RWPE1 (cell line): ENCODE measurements at regions of chr17 and their contacts with region 1.

Region 1: DNA sequence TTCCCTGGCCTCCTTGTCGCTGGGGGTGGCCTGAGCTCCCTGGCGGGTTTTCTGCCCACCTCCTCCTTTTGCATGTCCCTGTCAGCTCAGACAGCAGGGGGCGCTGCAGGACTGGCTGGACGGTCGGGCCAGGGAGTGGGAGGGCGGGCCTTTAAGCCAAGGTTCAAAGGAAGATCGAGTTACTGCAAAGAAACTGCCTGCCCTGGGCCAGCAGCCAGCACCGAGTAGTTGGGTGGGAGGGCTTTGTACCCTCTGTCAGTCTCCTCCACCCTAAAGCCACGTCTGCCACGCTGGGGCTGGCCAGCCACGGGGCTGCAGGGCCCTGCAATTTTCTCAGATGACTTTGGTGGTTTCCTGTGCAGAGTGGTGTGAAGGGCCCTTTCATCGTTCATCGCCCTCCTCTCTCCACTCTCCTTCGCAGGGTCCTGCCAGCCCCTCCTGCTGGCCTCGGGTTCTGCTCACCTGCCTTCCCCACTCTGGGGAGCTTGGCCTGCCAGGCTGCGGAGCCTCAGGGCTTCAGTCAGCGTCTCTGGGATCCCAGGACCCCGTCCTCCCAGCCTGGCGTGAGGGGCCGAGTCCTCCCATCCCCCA is 12.3 kb downstream of the GPR142 start:
- DNase-seq: peak; percentile 81
- H3K27ac ChIP-seq: peak overlapping the region; percentile 89
- CTCF ChIP-seq: peak; percentile 96

Region 2: GRCh38 chr17:74024871-74025531 is 354.6 kb before region 1 on chr17:
- CTCF ChIA-PET with region 1: no interaction called
- POLR2A ChIA-PET with region 1: no interaction called
- DNase-seq: no peak
- H3K27ac ChIP-seq: no peak overlapping the region
- CTCF ChIP-seq: no peak

Region 3: DNA sequence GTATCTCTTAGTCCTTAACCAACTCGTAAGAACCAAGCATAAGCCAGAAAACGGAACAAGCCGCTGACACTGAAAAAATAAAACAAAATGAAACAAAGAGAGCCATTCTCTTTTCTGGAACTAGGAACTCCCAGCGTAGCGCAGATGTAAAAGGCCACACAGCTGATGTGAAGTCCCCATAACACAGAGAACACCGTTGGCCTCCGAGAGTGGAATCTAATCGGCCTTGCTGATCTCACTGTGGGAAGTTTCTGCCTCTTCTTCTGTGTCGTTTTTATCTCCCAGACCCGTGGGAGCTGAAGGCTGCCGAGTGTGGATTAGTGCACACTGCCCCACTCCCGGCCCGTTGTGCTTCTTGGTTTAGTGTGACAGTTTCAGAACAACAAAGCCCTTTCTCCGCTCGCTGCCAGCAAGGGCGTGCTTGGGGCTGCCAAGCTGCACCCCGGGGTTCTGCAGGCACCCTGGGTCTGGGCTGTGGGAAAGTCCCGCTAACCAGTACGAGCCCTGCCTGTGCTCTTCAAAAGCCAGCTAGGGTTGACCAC is 144.5 kb before region 1 on chr17:
- CTCF ChIA-PET with region 1: no interaction called
- POLR2A ChIA-PET with region 1: no interaction called
- DNase-seq: no peak
- H3K27ac ChIP-seq: no peak overlapping the region
- CTCF ChIP-seq: no peak

Region 4: DNA sequence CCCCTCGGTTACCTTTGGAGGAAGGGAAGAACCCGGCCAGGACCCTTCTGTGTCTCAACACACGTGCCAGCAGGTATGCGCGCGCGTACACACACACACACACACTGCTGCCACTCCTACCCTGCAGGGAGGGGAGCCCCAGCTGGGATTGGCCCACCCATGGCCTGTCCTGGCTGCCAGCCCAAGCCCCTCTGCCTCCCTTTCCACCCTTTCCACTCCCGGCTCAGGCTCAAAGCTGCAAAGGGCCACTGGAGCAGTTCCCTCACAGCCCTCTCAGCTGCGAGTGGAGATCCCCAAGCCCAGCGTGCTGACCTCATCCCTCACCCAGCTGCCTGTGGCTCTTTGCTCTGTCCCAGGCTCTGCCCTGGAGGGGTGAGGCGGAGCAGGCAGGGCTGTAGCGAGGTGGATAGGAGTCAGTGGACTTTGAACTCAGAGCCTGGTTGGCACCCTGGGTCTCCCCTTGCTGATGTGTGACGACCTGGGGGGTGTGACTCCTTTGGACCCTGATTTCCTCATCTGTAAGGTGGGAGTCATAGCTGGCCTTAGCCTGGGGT is 39.0 kb before region 1 on chr17:
- CTCF ChIA-PET with region 1: no interaction called
- POLR2A ChIA-PET with region 1: no interaction called
- DNase-seq: no peak
- H3K27ac ChIP-seq: no peak overlapping the region
- CTCF ChIP-seq: no peak

Region 5: DNA sequence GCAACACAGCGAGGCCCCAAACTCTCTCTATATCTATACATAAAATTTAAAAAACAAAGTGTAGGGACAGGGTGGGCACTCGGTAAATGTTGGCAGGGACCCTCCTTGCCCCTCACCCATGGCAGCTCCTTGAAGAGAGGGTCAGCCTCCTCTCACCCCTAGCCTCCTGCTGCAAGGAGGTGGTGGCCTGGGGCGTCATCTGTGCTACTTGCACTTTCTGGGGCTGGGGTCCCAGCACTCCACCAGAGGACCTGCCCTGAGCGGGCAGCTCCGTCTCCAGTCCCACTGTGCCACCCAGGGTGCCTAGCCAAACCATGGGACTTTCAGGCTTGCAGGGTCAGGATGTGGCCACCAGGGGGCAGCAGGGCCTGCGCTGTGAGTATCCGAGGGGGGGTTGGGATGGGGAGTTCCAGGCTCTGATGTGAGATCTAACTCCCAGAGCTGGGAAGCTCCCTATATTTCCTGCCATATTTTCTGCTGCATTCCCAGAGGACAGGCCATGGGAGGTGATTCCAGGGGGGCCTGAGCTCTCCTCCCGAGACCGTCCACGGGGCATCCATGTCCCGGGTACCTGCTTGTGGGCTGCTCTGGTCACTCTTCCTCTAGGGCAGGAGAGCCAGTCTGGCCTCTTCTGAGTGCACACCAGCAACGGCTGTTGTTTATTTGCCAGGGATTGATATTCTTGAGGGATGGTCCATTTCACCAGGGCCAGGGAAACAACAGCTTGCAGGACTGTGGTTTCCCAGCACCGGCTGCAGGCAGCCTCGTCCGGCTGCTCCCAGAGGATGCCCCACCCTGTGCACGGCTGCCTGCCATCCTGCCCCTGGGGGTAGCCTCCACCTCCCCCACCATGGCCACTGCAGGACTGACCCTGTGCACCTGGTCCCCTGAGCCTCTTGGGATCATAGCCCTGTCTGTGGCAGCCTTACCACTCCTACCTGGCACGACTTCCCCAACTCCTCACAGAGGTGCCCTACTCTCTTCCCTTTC is 11.2 kb before region 1 on chr17:
- CTCF ChIA-PET with region 1: interaction called, 26 read pairs
- POLR2A ChIA-PET with region 1: no interaction called
- DNase-seq: peak; percentile 76
- H3K27ac ChIP-seq: no peak overlapping the region
- CTCF ChIP-seq: peak; percentile 96

Region 6: GRCh38 chr17:74417178-74418045 is 37.8 kb after region 1 on chr17:
- CTCF ChIA-PET with region 1: interaction called, 11 read pairs
- POLR2A ChIA-PET with region 1: no interaction called
- DNase-seq: peak; percentile 79
- H3K27ac ChIP-seq: peak overlapping the region; percentile 20; the same call in 1 of the 2 replicates
- CTCF ChIP-seq: no peak

Region 7: GRCh38 chr17:74442670-74443515 is 63.3 kb after region 1 on chr17:
- CTCF ChIA-PET with region 1: interaction called, 23 read pairs
- POLR2A ChIA-PET with region 1: no interaction called
- DNase-seq: peak; percentile 73
- H3K27ac ChIP-seq: peak overlapping the region; percentile 88
- CTCF ChIP-seq: no peak

Region 8: DNA sequence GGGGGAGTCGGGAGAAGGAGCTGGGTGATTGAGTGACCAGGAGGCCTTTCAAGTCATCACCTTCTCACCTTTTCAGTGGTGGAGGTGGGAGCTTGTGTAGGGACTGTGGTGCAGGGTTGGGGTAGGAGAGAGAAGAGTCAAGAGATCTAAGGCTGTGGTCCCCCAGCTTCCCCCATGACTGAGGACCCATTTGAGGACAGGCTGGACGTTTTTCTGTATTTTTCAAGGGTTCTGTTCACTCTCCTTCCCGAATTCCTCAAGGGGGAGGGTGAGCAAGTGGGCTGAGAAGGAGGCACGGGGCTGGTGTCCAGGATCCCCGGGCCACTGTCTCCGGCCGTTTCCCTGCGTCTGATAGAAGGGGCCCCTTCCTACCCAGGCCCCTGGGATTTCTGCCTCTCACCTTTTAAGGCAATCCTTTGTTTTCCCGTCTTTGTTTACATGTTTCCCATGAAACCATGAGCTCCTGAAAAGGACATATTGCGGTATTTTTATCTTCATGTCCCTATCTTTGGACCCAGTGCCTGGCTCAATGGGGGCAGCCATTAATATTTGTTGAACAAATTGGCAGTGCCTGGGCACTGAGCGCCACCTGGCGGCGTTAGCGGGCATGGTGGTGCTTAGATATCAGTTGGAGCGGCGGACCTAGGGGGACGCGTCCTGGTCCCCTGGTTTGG is 77.7 kb after region 1 on chr17:
- CTCF ChIA-PET with region 1: interaction called, 56 read pairs
- POLR2A ChIA-PET with region 1: no interaction called
- DNase-seq: peak; percentile 68
- H3K27ac ChIP-seq: peak overlapping the region; percentile 9; the same call in 1 of the 2 replicates
- CTCF ChIP-seq: peak; percentile 96